ENCODE measurements at regions of chr3 and their contacts with region 1.

Region 1: DNA sequence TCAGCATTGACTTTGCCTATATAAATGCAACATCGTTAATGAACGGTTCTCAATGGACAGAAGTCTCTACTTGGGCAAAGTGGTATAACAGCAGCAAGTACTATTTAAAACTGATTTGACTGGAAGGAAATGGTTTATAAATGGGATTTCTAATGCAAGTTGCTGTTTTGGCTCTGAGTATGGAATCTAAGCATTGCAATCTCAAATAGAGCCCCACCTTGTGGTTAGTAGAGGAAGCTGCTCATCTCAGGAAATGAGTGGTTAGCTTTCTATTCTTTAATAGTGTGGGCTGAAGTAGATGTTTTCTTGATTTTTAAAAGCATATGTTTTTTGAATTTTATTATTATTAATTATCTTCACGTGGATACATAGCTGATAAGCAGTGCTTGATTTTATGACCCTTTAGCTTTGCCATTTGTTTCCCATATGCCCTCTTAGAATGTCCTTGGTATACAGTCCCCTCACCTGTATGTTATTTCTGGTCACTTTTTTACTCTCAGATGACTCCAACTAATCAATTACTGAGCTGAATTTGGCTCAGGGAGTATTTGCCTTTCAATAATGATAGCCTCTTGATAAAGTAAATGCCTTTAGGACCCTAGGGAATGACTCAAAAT is 67.1 kb downstream of the OXSM start:
- DNase-seq: peak; percentile 65
- CTCF ChIP-seq: peak; percentile 69

Region 2: DNA sequence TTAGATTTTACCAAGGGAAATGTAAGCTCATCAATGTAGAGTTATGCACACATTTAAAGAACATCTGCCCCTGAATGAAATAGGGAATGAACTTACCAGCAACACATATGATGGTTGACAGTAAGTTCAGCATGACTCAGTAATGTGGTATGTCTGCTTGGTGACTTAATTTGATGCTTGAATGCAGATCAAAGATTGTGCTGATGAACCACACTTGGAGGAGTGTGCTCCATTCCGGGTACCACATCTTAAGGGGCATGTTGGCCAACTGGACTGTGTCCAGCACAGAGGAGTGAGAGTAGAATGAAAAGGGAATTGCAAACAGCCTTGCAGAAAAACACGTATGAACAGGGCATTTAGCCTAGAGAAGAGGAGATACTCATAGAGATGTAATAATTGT is 600.0 kb before region 1 on chr3:
- CTCF ChIA-PET with region 1: no interaction called
- POLR2A ChIA-PET with region 1: no interaction called
- DNase-seq: no peak
- CTCF ChIP-seq: no peak

Region 3: DNA sequence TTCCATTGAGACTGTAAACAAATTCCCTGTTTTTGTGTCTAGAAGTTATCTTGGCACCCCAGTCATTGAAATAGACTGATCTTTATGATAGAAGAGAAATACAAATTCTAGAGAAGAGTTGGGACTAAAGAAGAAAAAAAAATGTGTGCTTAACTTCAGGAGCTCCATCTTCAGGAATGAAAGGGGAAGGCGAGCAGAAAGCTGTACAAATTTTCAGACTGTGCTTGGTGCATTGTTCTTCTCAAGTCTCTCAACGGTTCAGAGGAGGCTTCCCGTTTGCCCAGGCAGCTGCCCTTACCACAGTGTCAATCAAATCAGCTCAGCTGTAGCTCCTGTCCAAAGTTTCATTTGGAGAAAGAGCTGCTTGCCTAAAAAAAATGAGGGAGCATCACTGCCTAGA is 25.4 kb before region 1 on chr3:
- CTCF ChIA-PET with region 1: interaction called, 19 read pairs
- POLR2A ChIA-PET with region 1: no interaction called
- DNase-seq: no peak
- CTCF ChIP-seq: peak; percentile 28

Region 4: GRCh38 chr3:25843332-25843731 is 13.7 kb before region 1 on chr3:
- CTCF ChIA-PET with region 1: interaction called, 36 read pairs
- POLR2A ChIA-PET with region 1: interaction called, 3 read pairs
- DNase-seq: no peak
- CTCF ChIP-seq: no peak

Region 5: GRCh38 chr3:26118165-26118564 is 261.2 kb after region 1 on chr3:
- CTCF ChIA-PET with region 1: no interaction called
- POLR2A ChIA-PET with region 1: no interaction called
- DNase-seq: peak; percentile 10
- CTCF ChIP-seq: peak; percentile 46